Thyroid gland (tissue), 4 donors: ENCODE measurements at regions of chr4 and their contacts with region 1.

Region 1: GRCh38 chr4:64539234-64539849 is 130.1 kb upstream of the TECRL start:
- DNase-seq: peak; percentile 36 to 60
- H3K4me3 ChIP-seq: no peak overlapping the region
- H3K27ac ChIP-seq: no peak overlapping the region
- H3K4me1 ChIP-seq: no peaks in the 10 kb centered on the region
- H3K27me3 ChIP-seq: no peaks in the 10 kb centered on the region
- CTCF ChIP-seq: peak; percentile 30 to 86 (median 76)
- POLR2A ChIP-seq: no peak

Region 2: GRCh38 chr4:64158648-64159326 is 380.6 kb before region 1 on chr4:
- intact Hi-C with region 1: loop called (anchors 5 kb)
- DNase-seq: peak; percentile 61 to 69
- H3K4me3 ChIP-seq: no peak overlapping the region
- H3K27ac ChIP-seq: no peak overlapping the region
- H3K4me1 ChIP-seq: no peaks in the 10 kb centered on the region
- H3K27me3 ChIP-seq: no peaks in the 10 kb centered on the region
- CTCF ChIP-seq: peak; percentile 46 to 74 (median 65)
- POLR2A ChIP-seq: no peak

Region 3: GRCh38 chr4:65353098-65353497 is 813.8 kb after region 1 on chr4:
- intact Hi-C with region 1: no loop called
- DNase-seq: no peak
- H3K4me3 ChIP-seq: no peak overlapping the region
- H3K27ac ChIP-seq: no peak overlapping the region
- H3K4me1 ChIP-seq: no peaks in the 10 kb centered on the region
- H3K27me3 ChIP-seq: no peaks in the 10 kb centered on the region
- CTCF ChIP-seq: no peak
- POLR2A ChIP-seq: no peak